ENCODE measurements at regions of chr5 and their contacts with region 1.

Region 1: GRCh38 chr5:40904205-40904993 is 4.9 kb upstream of the C7 start:
- DNase-seq: peak; percentile 71
- ATAC-seq: peak; percentile 98
- H3K4me3 ChIP-seq: peak overlapping the region in 2 of 3 experiments; percentile 23 to 35; a peak in 3 of 6 replicates
- H3K27ac ChIP-seq: peak overlapping the region; percentile 25
- H3K4me1 ChIP-seq: peaks cover 50% of the 10 kb centered on the region
- H3K27me3 ChIP-seq: no peaks in the 10 kb centered on the region
- CTCF ChIP-seq: peak; percentile 92
- EP300 ChIP-seq: peak in 1 of 2 experiments; percentile 46; a peak in 1 of 4 replicates
- POLR2A ChIP-seq: no peak
- RAD21 ChIP-seq: peak; percentile 84

Region 2: DNA sequence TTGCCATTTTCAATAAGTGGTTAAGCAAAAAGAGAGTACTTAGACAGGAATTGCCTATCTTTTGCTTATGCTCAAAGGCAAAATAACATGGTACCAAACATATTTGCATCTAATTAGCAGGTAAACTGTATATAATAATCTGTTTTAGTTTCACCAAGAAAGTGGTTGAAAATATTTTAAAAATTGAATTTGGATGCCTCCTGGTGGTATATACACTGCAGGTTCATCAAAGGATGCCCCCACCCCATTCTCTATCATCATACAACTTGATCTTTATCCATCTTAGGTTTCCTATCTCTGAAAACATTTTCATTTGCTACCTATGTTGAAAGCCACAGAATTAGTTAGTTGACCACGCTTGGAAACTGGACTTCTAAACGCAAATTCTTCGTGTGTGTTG is 213.8 kb after region 1 on chr5:
- CTCF ChIA-PET with region 1: interaction called, 7 read pairs
- POLR2A ChIA-PET with region 1: no interaction called
- in situ Hi-C with region 1: no loop called
- intact Hi-C with region 1: loop called (anchors 1 kb)
- DNase-seq: no peak
- ATAC-seq: 0 out of 3 replicates have a peak, but pooled peaks have one; percentile 29
- H3K4me3 ChIP-seq: no peak overlapping the region
- H3K27ac ChIP-seq: no peak overlapping the region
- H3K4me1 ChIP-seq: no peaks in the 10 kb centered on the region
- H3K27me3 ChIP-seq: no peaks in the 10 kb centered on the region
- CTCF ChIP-seq: no peak; the same call in 1 of the 2 replicates
- EP300 ChIP-seq: no peak
- POLR2A ChIP-seq: no peak
- RAD21 ChIP-seq: no peak

Region 3: DNA sequence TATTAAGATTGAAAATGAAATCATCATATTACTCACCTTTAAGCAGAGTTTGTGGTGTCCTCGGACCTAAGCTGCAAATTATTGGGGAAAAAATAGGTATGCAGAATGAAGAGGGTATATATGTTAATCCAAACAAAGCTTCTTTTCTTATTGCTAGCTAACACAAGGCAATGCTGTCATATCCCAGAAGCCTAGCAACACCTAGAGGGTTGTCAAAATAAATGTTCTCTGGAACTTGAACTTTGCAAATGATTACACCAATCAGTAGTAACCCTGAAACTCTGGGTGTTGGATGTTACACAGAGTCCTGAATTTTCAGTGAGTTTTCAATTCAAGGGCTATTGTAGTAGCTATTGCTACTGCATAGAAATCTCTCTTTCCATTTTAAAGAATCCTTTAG is 308.9 kb after region 1 on chr5 and contains the start of gene C6:
- CTCF ChIA-PET with region 1: no interaction called
- POLR2A ChIA-PET with region 1: no interaction called
- in situ Hi-C with region 1: no loop called
- intact Hi-C with region 1: loop called (anchors 5 kb)
- DNase-seq: peak; percentile 65
- ATAC-seq: peak; percentile 99
- H3K4me3 ChIP-seq: no peak within 1 kb of the TSS; a peak in 1 of 6 replicates
- H3K27ac ChIP-seq: peak within 1 kb of the TSS; percentile 57
- H3K4me1 ChIP-seq: peaks cover 30% of the 10 kb centered on the region
- H3K27me3 ChIP-seq: no peaks in the 10 kb centered on the region
- CTCF ChIP-seq: peak; percentile 22; the same call in 1 of the 2 replicates
- EP300 ChIP-seq: peak in 1 of 2 experiments; percentile 8; a peak in 1 of 4 replicates
- POLR2A ChIP-seq: no peak
- RAD21 ChIP-seq: no peak
- total RNA-seq, gene C6: 2.5 and 4.7 TPM in 2 replicates

Region 4: DNA sequence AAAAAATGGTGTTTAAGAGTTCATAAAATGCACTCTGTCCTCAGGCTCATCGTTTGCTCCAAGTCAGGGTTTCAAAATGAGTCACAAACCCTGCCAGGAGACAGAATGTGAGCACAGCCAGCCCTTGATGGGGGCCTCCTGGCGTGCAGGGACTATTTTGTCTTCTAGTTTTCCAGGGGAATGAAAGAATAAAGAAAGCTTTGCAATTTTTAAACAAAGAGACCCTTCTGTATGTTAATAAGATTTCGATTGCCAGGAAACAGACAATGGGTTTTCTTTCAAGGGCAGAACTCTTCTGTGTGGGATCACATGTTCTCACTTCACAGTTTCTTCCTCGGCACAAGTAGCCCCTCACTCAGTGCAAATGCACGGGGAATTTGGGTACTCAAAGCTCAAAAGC is 430.4 kb after region 1 on chr5:
- CTCF ChIA-PET with region 1: no interaction called
- POLR2A ChIA-PET with region 1: no interaction called
- in situ Hi-C with region 1: no loop called
- intact Hi-C with region 1: loop called (anchors 5 kb)
- DNase-seq: no peak
- ATAC-seq: no peak
- H3K4me3 ChIP-seq: no peak overlapping the region
- H3K27ac ChIP-seq: no peak overlapping the region
- H3K4me1 ChIP-seq: no peaks in the 10 kb centered on the region
- H3K27me3 ChIP-seq: no peaks in the 10 kb centered on the region; a peak in 1 of 5 replicates
- CTCF ChIP-seq: no peak
- EP300 ChIP-seq: no peak
- POLR2A ChIP-seq: no peak
- RAD21 ChIP-seq: no peak

Region 5: DNA sequence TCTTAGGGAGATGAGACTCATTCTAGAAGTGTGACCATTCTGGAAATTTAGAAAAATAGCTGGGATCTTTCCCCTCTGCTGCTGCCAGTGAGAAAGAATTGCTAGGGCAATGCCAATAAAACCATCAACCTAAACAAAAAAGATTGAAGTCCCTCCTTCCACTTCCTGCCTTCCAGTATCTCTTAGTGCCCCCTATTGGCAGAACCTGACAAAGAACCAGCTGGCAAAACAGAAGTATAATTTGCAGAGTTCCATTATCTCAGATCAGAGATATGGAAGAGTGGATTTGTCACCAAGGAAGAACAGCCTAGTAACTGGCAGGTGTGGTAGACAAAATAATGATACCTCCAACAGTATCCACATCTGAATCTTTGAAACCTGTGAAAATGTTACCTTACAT is 619.8 kb after region 1 on chr5:
- CTCF ChIA-PET with region 1: no interaction called
- POLR2A ChIA-PET with region 1: no interaction called
- in situ Hi-C with region 1: no loop called
- intact Hi-C with region 1: loop called (anchors 5 kb)
- DNase-seq: no peak
- ATAC-seq: no peak
- H3K4me3 ChIP-seq: no peak overlapping the region
- H3K27ac ChIP-seq: no peak overlapping the region
- H3K4me1 ChIP-seq: no peaks in the 10 kb centered on the region
- H3K27me3 ChIP-seq: no peaks in the 10 kb centered on the region
- CTCF ChIP-seq: no peak
- EP300 ChIP-seq: no peak
- POLR2A ChIP-seq: no peak
- RAD21 ChIP-seq: no peak

Region 6: GRCh38 chr5:41641621-41642020 is 737.2 kb after region 1 on chr5:
- CTCF ChIA-PET with region 1: no interaction called
- POLR2A ChIA-PET with region 1: no interaction called
- in situ Hi-C with region 1: loop called (anchors 5 kb)
- intact Hi-C with region 1: loop called (anchors 1 kb)
- DNase-seq: no peak
- ATAC-seq: no peak
- H3K4me3 ChIP-seq: no peak overlapping the region
- H3K27ac ChIP-seq: no peak overlapping the region
- H3K4me1 ChIP-seq: peaks cover 35% of the 10 kb centered on the region
- H3K27me3 ChIP-seq: no peaks in the 10 kb centered on the region
- CTCF ChIP-seq: peak; percentile 16; the same call in 1 of the 2 replicates
- EP300 ChIP-seq: no peak
- POLR2A ChIP-seq: no peak
- RAD21 ChIP-seq: no peak